AG04449 (cell line): ENCODE measurements at regions of chr1 and their contacts with region 1.

Region 1: DNA sequence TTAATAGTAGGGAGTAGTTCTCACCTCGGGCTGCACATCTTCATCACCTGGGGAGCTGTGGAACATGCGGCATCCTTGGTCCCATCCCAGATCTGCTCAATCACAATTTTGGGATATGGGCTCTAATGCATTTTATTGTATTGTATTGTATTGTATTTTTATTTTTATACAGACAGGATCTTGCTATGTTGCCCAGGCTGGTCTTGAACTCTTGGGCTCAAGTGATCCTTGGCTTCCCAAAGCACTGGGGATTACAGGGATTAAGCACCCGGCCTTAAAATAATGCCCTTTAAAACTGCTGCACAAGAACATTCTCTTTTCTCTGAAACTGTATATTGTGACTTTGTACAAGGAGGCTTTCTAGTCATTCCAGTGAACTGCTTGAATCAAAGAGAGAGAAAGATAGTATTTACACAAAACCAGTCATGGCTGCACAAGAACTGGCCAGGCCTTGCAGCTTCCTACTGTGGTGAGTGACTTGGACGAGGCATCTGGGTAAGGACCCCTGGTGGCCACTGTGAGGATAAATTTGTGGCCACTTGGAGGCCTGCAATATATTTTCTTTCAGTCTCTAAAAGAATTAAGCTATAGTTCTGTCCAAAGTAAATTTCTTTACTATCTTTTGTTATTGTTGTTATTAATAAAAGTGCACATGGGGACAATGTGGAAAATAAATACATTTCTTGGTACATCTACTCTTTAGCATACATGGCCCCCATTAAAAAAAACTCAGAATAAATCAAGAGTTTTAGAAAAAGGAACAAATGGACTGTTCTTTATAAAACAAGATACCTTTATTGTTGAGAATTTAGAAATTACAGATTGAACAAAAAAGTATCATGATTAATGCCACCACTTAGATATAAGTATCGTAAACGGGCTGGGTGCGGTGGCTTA is 48.0 kb downstream of the TBCE start:
- DNase-seq: peak; percentile 33
- H3K4me3 ChIP-seq: no peak overlapping the region
- CTCF ChIP-seq: peak; percentile 78

Region 2: GRCh38 chr1:235225299-235225698 is 190.0 kb before region 1 on chr1:
- CTCF ChIA-PET with region 1: interaction called, 16 read pairs
- POLR2A ChIA-PET with region 1: no interaction called
- DNase-seq: no peak
- H3K4me3 ChIP-seq: no peak overlapping the region
- CTCF ChIP-seq: no peak

Region 3: DNA sequence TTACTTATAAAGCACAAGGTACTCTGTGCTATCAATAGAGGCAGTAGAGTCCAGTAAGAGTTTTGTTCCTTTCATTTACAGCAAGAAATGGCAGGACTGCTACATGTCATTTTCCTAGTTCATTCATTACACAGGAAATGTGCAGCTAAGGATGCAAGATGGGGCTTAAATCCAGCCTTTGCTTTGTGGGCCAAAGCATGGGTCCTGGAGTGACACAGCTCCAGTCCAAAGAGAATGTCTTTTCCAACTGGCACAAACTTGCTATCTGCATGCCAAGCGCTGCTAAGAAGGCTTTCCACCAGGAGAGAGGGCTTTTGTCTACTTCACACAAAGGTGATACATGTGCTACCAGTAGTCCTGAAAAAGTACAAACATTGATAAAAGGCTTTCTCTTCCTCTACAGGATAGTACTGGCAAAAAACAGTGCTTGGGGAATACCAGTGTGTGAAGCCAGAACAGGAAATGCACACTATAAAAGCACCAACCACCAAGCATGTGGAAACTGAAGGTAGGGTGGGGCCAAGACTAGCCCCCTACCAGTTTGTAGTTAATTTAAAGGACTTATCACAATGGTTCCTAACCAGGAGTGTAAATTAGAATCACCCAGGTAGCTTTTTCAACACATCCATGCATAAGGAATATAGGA is 156.0 kb before region 1 on chr1:
- CTCF ChIA-PET with region 1: interaction called, 31 read pairs
- POLR2A ChIA-PET with region 1: no interaction called
- DNase-seq: no peak
- H3K4me3 ChIP-seq: no peak overlapping the region
- CTCF ChIP-seq: no peak

Region 4: DNA sequence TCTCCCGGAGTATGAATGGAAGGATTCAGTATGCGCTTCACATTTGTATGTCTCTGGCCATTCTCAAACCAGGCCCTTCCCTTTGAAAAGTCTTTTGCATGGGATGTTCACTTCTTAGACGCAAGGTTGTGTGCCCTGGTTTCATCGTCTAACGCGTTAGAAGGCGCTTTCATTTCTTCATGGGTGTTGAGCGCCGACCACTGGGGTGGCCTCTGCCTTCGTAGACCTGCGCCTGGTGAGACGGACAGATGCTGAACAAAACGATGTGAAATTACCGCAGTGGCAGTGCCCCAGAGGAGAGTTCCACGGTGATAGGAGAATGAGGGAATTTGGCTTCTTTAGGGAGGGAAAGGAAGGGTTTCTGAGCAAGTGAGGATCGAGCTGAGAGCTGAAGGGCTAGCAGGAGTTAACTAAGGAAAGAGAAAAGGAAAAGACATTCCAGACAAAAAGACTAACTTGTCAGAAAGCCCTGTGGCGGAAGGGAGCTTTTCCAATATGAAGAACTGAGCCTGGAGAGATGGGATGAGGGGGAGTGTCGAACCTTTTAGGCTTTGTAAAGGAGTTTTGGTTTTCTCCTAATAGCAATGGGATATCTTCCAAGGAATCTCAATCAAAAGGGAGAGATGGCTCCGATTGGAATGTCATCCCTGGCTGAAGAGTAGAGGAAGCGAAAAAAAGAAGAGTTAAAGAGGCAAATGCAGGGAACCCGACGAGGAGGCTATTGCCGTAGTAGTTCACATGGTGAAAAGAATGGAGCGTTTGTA is 85.9 kb before region 1 on chr1:
- CTCF ChIA-PET with region 1: interaction called, 15 read pairs
- POLR2A ChIA-PET with region 1: interaction called, 3 read pairs
- DNase-seq: no peak
- H3K4me3 ChIP-seq: peak overlapping the region; percentile 60
- CTCF ChIP-seq: no peak

Region 5: DNA sequence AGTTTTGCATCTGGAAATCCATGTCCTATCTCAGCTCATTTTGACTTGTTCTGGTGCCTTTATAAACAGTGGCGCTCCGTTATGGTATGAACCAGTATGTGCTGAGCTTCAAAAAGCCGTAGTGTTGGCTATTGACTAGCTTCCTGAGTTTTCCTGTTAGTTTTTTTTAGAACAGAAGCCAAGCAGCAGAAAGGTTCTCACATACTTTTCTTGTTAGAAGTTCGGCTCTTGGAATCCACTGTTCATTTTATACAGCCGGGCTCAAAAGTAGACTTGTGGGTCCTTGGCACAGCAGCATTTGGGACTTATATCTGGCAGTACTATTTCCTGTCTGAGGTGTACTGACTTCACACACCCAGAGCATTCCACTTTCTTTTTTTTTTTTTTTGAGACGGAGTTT is 15.7 kb after region 1 on chr1:
- CTCF ChIA-PET with region 1: interaction called, 51 read pairs
- POLR2A ChIA-PET with region 1: no interaction called
- DNase-seq: peak; percentile 23
- H3K4me3 ChIP-seq: no peak overlapping the region
- CTCF ChIP-seq: no peak